Activated CD4-positive, alpha-beta T cell treated with anti-CD3 and anti-CD28 coated beads for 36 hours (primary cell): ENCODE measurements at regions of chr2 and their contacts with region 1.

Region 1: DNA sequence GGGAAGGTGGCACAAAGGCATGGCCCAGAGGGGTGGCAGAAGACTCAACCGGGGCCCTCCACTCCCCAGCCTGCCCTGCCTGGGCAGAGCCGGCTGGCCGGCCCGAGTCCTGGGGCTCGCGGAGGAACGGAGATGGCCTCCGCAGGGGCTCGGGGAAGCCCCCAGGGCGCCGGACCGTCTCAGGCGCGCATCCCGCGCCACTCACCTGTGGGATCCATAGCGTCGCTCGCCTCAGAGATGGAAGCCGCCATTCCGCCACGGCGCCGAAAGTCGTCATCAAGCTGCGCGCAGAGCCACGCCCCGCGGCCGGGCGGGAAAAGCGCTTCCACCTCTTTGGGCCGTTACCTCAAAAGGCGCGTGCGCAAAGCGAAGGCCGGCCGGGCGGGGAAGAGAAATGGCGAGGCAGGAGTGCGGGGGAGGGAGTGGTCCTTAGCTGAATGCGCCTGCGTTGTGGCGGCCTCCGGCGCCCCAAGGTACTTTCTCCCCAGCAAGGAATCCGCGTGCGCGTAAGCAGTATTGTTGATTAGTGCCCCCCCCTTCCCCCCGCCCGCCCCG is at the start of gene SMPD4:
- DNase-seq: peak; percentile 98
- ATAC-seq: peak; percentile 74
- H3K4me3 Mint-ChIP-seq: peak within 1 kb of the TSS; percentile 95
- H3K27ac Mint-ChIP-seq: peak within 1 kb of the TSS; percentile 90
- H3K4me1 Mint-ChIP-seq: peaks cover 22% of the 10 kb centered on the region
- H3K27me3 Mint-ChIP-seq: no peaks in the 10 kb centered on the region
- total RNA-seq, gene SMPD4: 73.8 to 78.6 TPM

Region 2: GRCh38 chr2:130150181-130151144 is 30.9 kb before region 1 on chr2:
- CTCF ChIA-PET with region 1: no interaction called
- POLR2A ChIA-PET with region 1: no interaction called
- intact Hi-C with region 1: loop called in 1 of 2 experiments (anchors 1 kb)
- DNase-seq: no peak
- ATAC-seq: no peak
- H3K4me3 Mint-ChIP-seq: no peak overlapping the region
- H3K27ac Mint-ChIP-seq: no peak overlapping the region
- H3K4me1 Mint-ChIP-seq: no peaks in the 10 kb centered on the region
- H3K27me3 Mint-ChIP-seq: peaks cover 5% of the 10 kb centered on the region

Region 3: DNA sequence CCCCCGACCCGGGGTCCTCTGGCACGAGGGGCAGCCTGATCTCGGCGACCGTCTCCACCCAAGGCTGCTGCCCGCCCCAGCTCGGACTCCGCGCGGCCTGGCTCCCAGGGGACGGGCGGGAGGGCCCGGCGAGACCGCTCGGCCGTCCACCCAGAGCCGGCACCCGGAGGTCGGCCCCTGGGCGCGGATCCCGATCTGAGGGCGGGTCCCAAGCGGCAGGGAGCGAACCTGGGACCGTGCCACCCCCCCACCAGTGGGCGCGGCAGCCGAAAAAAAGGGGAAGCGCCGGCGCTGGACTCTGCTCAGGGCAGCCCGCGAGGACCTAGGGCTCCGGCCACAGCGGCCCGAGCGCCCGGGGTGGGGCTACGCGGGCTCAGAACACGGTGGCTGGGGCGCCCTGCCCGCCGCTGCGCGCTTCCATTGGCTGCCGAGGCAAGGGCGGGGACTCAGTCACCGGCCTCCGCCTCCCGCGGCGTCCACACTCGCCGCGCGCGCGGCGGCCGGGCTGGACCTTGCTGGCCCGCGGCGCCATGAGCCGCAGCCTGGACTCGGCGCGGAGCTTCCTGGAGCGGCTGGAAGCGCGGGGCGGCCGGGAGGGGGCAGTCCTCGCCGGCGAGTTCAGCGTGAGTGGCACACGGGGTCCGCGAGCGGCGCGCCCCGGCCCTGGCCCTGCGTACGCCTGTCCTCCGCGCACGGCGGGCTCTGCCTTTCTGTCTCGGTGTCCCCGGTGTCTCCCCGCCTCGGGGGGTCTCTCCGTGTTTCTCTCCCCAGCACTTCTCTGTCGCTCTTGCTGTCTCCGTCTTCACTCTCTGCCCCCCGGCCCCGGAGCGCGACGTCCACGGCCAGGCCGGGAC is 174.4 kb after region 1 on chr2 and contains the start of gene PTPN18:
- CTCF ChIA-PET with region 1: no interaction called
- POLR2A ChIA-PET with region 1: interaction called, 3 read pairs
- intact Hi-C with region 1: loop called in 1 of 2 experiments (anchors 1 kb)
- DNase-seq: peak; percentile 76
- ATAC-seq: peak; percentile 96
- H3K4me3 Mint-ChIP-seq: peak within 1 kb of the TSS; percentile 67
- H3K27ac Mint-ChIP-seq: peak within 1 kb of the TSS; percentile 43
- H3K4me1 Mint-ChIP-seq: peaks cover 8% of the 10 kb centered on the region
- H3K27me3 Mint-ChIP-seq: no peaks in the 10 kb centered on the region
- total RNA-seq, gene PTPN18: 41.6 to 49.3 TPM

Region 4: DNA sequence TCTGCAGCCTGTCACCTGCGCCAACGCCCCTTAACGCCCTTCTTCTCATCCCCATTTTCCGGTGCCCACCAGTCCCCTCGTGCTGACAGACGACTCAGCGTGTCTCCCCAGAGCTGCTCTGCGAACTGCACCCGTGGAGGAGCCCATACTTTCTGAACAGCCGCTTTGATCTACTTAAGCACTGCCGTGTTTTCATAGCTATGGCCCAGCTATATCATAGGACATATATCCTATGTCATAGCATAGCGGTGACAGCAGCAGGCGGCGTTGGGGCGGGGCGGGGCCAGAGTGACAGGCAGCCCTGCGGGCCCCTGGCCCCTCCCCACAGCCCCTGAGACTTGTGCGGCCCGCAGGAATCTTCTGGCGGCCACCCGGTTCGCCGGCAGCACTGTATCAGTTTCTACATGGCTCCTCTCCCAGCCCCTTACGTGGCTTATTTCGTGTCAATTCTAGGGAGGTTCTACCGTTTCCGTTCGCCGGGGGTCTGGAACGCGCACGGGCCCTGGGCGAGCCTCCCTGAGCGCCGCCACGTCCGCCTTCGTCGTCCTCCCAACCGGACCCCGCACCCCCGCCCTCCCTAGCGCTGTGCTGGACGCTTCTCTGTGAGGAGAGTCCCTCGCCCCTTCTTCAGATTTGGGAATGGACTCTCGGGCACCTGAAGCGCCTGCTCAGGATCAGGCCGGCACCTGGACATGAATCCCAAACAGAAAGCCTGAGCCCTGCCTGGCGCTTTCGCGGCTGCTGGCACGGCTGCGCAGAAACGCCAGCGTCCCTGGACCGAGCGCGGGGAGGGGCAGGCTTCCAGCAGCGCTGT is 209.9 kb after region 1 on chr2:
- CTCF ChIA-PET with region 1: no interaction called
- POLR2A ChIA-PET with region 1: no interaction called
- intact Hi-C with region 1: loop called in 1 of 2 experiments (anchors 2 kb)
- DNase-seq: peak; percentile 91
- ATAC-seq: peak; percentile 99
- H3K4me3 Mint-ChIP-seq: peak overlapping the region; percentile 72
- H3K27ac Mint-ChIP-seq: peak overlapping the region; percentile 87
- H3K4me1 Mint-ChIP-seq: peaks cover 10% of the 10 kb centered on the region
- H3K27me3 Mint-ChIP-seq: peaks cover 6% of the 10 kb centered on the region